Posterior vena cava (tissue), 2 donors: ENCODE measurements at regions of chr14 and their contacts with region 1.

Region 1: DNA sequence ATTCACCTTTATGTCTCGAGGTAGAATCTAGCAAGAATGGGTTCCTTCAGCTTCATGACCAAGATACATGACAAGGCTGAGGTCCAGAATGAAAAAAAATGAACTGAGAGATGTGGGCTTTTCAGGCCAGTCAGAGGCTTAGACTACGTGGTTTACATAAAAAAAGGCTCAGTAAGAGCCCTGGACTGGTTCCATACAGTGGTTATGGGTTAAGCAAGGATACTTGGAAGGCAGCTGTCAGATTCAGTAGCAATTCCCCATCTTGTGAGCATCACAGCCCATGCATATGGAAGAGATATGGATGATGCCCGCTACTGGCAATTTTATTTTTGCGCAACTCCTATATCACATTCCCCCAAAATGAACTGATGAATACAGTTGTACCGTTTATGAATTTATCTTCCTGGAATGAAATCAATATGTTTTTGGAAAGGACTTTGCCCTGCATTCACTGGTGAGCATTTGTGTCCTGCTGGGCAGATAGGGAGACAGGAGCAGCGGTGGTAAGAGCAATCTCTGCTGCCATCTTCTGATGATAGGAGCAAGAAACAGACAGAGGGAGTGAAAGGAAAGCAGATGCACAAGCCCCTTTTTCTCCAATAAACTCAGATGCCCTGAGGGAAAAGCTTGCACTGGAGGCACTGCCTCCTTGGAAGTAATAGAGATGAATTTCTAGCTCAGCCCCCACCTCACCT is 280.4 kb downstream of the GALC start:
- DNase-seq: no peak

Region 2: DNA sequence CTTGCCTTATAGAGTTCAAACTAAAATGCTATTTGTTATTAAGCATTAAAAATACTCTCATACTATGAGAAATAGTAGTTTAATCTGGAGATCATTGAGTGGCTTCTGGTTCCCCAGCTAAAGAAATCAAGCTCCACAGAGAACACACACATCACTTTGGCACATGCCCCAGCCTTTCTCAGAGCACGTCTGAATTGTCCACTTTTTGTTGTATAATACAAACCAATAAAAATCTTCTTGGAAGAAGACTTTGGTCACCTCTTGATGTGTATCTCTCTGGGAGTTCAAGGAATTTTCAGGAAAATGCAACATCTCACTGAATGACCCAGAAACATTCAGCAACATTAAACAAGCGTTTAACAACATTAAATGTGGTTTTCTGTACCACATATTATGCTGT is 133.5 kb before region 1 on chr14:
- intact Hi-C with region 1: no loop called
- DNase-seq: no peak

Region 3: GRCh38 chr14:87783071-87783470 is 70.5 kb after region 1 on chr14:
- intact Hi-C with region 1: loop called in 1 of 2 experiments (anchors 2 kb)
- DNase-seq: no peak